SK-N-SH (cell line): ENCODE measurements at regions of chr12 and their contacts with region 1.

Region 1: GRCh38 chr12:53352331-53353256 is 16.4 kb upstream of the SP7 start:
- DNase-seq: peak; percentile 80
- H3K4me3 ChIP-seq: no peak overlapping the region; a peak in 1 of 4 replicates
- H3K27ac ChIP-seq: no peak overlapping the region
- H3K4me1 ChIP-seq: no peaks in the 10 kb centered on the region
- H3K27me3 ChIP-seq: no peaks in the 10 kb centered on the region
- CTCF ChIP-seq: peak; percentile 85
- EP300 ChIP-seq: no peak
- RAD21 ChIP-seq: peak; percentile 96

Region 2: GRCh38 chr12:53365245-53365904 is 12.8 kb after region 1 on chr12:
- CTCF ChIA-PET with region 1: interaction called, 14 read pairs
- POLR2A ChIA-PET with region 1: no interaction called
- DNase-seq: no peak
- H3K4me3 ChIP-seq: no peak overlapping the region
- H3K27ac ChIP-seq: no peak overlapping the region
- H3K4me1 ChIP-seq: no peaks in the 10 kb centered on the region
- H3K27me3 ChIP-seq: no peaks in the 10 kb centered on the region
- CTCF ChIP-seq: no peak
- EP300 ChIP-seq: no peak
- RAD21 ChIP-seq: no peak

Region 3: GRCh38 chr12:53388932-53389331 is 36.3 kb after region 1 on chr12:
- CTCF ChIA-PET with region 1: interaction called, 31 read pairs
- POLR2A ChIA-PET with region 1: no interaction called
- DNase-seq: no peak
- H3K4me3 ChIP-seq: 0 out of 4 replicates have a peak overlapping the region, but pooled peaks of 1 of the 2 experiments have one; percentile 17
- H3K27ac ChIP-seq: peak overlapping the region in 1 of 2 experiments; percentile 84; a peak in 1 of 4 replicates
- H3K4me1 ChIP-seq: peaks cover 8 to 52% of the 10 kb centered on the region in 2 experiments
- H3K27me3 ChIP-seq: no peaks in the 10 kb centered on the region
- CTCF ChIP-seq: no peak
- EP300 ChIP-seq: no peak
- RAD21 ChIP-seq: no peak

Region 4: GRCh38 chr12:53427905-53428594 is 75.5 kb after region 1 on chr12:
- CTCF ChIA-PET with region 1: interaction called, 236 read pairs
- POLR2A ChIA-PET with region 1: interaction called, 5 read pairs
- DNase-seq: no peak
- H3K4me3 ChIP-seq: no peak overlapping the region
- H3K27ac ChIP-seq: no peak overlapping the region
- H3K4me1 ChIP-seq: peaks cover 8 to 11% of the 10 kb centered on the region in 2 experiments; a peak in 3 of 4 replicates
- H3K27me3 ChIP-seq: no peaks in the 10 kb centered on the region
- CTCF ChIP-seq: no peak
- EP300 ChIP-seq: no peak
- RAD21 ChIP-seq: no peak

Region 5: DNA sequence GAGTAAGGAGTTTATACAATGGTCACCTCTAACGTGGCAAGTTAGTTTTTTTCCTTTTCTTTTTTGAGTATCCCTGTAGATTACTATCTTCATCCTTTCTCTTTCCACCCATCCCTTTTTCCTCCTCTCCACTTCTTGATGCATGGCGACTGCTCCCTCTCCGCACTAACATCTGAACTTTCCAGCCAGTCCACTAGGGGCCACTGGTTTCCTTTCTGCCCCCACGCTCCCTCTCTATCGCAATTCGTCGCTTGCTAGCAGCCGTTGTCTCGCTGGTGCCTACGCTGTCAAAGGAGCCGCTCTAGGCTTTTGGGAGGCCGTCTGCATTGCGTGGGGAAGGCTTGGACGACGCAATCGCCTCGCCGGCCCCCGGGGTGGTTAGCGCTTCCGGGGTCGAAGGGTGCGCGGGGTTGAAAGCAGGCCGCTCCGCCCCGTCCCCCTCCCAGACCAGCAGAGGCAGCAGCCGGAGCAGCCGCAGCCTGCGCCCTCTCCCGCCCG is 99.1 kb after region 1 on chr12 and contains the start of gene PCBP2:
- CTCF ChIA-PET with region 1: interaction called, 11 read pairs
- POLR2A ChIA-PET with region 1: interaction called, 4 read pairs
- DNase-seq: peak; percentile 96
- H3K4me3 ChIP-seq: peak within 1 kb of the TSS; percentile 68 to 83
- H3K27ac ChIP-seq: peak within 1 kb of the TSS; percentile 95 to 96
- H3K4me1 ChIP-seq: peaks cover 10 to 13% of the 10 kb centered on the region in 2 experiments; a peak in 3 of 4 replicates
- H3K27me3 ChIP-seq: no peaks in the 10 kb centered on the region
- CTCF ChIP-seq: peak; percentile 85
- EP300 ChIP-seq: 0 out of 4 replicates have a peak, but pooled peaks have one; percentile 4 to 17
- RAD21 ChIP-seq: no peak
- polyA plus RNA-seq, gene PCBP2: 336 and 368 TPM in 2 replicates

Region 6: GRCh38 chr12:53500776-53501614 is 148.4 kb after region 1 on chr12 and contains the start of gene TARBP2:
- CTCF ChIA-PET with region 1: interaction called, 12 read pairs
- POLR2A ChIA-PET with region 1: no interaction called
- DNase-seq: peak; percentile 92
- H3K4me3 ChIP-seq: peak within 1 kb of the TSS; percentile 52 to 75
- H3K27ac ChIP-seq: peak within 1 kb of the TSS; percentile 94 to 100
- H3K4me1 ChIP-seq: peaks cover 33 to 37% of the 10 kb centered on the region in 2 experiments
- H3K27me3 ChIP-seq: no peaks in the 10 kb centered on the region
- CTCF ChIP-seq: no peak
- EP300 ChIP-seq: no peak
- RAD21 ChIP-seq: no peak
- polyA plus RNA-seq, gene TARBP2: 57.8 and 69.8 TPM in 2 replicates